Prostate gland (tissue), 2 donors: ENCODE measurements at regions of chr16 and their contacts with region 1.

Region 1: DNA sequence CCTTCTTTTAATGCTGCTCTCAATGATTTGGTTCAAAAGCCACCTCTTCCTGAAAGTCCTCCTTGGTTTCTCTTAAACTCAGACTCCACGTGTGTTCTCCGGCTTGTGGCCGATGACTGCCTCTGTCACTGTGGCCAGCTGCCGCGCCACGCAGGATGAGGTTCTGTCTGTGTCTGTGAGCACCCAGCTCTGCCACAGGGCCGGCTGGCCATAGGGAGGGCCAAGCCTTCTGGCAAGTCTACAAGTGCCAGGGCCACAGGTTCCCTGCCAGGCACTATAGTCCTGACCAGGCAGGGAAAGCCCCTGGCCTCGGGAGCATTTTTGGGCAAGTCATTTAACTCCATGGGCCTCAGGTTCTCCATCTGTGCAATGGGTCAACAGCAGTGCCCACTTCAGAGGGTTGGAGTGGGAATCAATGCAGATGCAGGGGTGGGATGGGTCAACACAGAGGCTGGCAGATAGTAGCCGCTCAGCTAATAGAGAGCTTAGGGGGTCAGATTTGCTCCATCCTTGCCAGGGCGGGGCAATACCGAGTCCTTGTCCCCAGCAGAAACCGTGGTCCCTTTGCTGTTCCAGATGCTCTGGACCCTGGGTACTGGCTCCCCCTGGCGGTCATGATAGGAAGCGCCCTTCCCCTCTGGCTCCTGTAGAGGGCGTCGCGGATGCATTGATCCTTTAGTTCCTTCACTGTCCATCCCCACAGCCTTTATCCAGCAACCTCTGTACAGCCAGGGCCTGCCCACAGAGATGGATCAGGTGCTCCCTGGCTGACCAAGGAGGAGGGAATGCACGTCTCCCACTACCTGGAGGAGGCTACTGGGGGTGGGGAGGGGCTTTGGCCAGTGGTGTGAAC is 19.3 kb upstream of the ADGRG3 start:
- DNase-seq: peak; percentile 70
- H3K4me3 ChIP-seq: no peak overlapping the region
- H3K27ac ChIP-seq: peak overlapping the region in 1 of 2 donors; percentile 40
- H3K4me1 ChIP-seq: no peaks in the 10 kb centered on the region
- H3K27me3 ChIP-seq: no peaks in the 10 kb centered on the region
- CTCF ChIP-seq: peak; percentile 99 to 100 (median 100)
- POLR2A ChIP-seq: no peak

Region 2: DNA sequence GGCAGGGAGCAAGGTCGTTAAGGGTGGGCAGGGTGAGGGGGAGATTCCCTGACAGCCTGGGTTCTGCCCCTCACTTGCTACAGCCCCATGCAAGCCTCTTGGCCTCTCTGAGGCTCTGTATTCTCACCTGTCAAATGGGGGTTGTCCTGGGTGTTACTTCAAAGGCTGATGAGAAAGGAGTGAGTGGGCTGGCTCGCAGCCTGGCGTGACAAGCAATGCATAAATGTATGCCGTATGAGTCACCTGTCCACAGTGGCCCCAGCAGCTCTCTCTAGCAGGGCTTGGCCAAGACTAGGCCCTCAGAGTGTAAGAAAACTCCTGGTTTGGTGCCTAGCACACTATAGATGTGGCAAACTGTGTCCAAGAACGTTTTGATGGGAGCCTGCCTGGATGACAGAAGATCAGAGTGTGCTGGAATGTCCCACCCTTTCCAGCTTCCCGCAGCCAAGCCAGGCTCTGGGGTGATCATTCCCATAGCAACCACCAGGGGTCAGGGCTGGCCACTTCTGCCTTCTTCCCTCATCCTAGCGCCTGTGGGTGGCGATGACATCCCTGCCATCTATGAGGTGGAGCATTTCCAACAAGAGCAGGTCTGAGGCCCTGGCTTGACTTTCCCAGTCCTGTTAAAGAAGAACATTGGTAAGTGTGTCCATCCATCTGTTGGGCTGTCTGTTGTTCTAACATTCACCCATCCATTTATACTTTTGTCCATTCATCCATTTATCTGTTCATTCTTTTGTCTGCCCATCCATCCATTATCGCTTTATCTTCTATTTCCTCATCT is 57.5 kb before region 1 on chr16:
- intact Hi-C with region 1: loop called (anchors 5 kb)
- DNase-seq: peak; percentile 59
- H3K4me3 ChIP-seq: no peak overlapping the region
- H3K27ac ChIP-seq: no peak overlapping the region
- H3K4me1 ChIP-seq: no peaks in the 10 kb centered on the region
- H3K27me3 ChIP-seq: no peaks in the 10 kb centered on the region
- CTCF ChIP-seq: peak; percentile 47 to 93 (median 84)
- POLR2A ChIP-seq: no peak

Region 3: DNA sequence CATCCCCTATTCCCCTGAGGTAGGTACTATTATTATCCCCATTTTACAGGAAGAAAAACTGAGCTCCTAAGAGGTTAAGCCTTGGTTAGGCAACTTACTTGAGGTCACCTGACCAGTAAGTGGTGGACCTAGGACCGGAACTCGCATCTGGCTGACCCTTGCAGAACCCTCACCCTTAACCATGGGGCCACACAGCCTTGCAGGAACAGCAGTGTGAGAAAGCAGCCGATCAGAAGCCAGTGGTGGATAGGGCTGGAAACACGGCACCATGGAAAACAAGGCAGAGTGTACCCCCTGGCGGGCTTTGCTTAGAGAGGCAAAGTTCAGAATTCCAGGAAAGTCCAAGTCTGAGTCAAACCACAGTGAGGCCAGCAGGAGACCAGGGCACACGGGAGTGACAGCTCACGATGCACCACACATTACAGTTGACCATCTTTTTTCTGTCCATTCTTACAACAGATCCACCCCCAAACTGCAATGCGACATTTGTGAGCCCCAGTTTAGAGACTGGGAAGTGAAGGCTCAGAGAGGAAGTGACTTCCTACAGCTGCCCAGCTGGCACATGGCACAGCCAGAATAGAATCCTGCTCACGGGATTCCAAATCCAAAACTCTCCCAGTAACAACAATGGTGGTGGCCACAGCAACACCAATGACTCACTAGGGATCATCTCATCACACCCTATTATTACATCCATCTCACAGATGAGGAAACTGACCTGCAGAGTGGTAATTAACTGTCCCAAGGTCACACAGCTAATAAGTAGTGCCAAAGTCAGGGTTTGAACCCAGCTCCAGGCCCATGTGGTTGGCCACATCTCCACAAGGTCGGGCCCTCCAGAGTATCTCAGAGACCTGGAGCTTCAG is 133.2 kb after region 1 on chr16:
- intact Hi-C with region 1: loop called (anchors 5 kb)
- DNase-seq: no peak
- H3K4me3 ChIP-seq: no peak overlapping the region
- H3K27ac ChIP-seq: no peak overlapping the region
- H3K4me1 ChIP-seq: no peaks in the 10 kb centered on the region
- H3K27me3 ChIP-seq: no peaks in the 10 kb centered on the region
- CTCF ChIP-seq: no peak
- POLR2A ChIP-seq: no peak